ENCODE measurements at regions of chr2 and their contacts with region 1.

Region 1: DNA sequence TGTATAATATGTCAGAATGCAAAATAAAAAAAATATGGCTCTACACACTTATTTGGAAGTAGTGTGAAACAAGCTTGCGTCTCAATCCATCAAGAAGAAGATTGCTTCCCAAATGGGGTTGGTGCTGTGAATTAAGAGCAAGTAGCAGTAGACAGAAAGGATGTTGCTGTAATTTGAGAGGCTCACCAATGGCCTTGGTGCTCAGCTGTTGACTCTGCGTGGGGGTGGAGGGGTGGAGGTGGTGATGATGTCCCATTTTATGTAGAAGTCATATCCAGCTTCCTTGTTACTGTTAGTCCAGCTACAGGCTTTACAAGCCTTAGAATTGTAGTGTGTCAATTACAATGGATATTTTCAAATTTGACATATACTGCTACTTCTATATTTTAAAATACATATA is 223.4 kb upstream of the RND3 start:
- DNase-seq: no peak
- H3K4me3 ChIP-seq: no peak overlapping the region
- H3K27ac ChIP-seq: no peak overlapping the region
- H3K4me1 ChIP-seq: no peaks in the 10 kb centered on the region
- H3K27me3 ChIP-seq: no peaks in the 10 kb centered on the region
- CTCF ChIP-seq: no peak

Region 2: GRCh38 chr2:150698016-150698661 is 12.8 kb before region 1 on chr2:
- CTCF ChIA-PET with region 1: no interaction called
- dilution Hi-C with region 1: no loop called
- in situ Hi-C with region 1: no loop called
- intact Hi-C with region 1: loop called (anchors 1 kb)
- DNase-seq: no peak
- H3K4me3 ChIP-seq: no peak overlapping the region
- H3K27ac ChIP-seq: no peak overlapping the region
- H3K4me1 ChIP-seq: no peaks in the 10 kb centered on the region
- H3K27me3 ChIP-seq: no peaks in the 10 kb centered on the region
- CTCF ChIP-seq: no peak

Region 3: DNA sequence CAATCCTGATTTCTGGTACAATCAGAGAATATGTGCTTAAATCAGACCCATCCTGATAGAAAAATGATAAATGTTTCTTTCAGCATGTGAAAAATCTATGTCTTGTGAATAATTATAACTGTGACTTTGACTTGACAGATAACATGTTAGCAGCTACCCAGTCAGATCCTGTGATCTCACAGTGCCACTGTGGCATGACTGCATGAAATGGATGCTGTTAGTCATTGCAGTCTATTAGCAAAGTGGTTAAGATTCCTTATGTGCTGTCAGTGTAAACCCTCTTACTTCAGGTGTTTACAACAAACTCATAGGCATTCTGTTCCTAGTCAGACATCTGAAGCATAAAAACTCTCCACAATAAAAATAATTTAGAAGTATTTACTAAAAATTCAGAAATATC is 21.1 kb after region 1 on chr2:
- CTCF ChIA-PET with region 1: no interaction called
- dilution Hi-C with region 1: no loop called
- in situ Hi-C with region 1: no loop called
- intact Hi-C with region 1: no loop called
- DNase-seq: peak; percentile 51
- H3K4me3 ChIP-seq: no peak overlapping the region
- H3K27ac ChIP-seq: no peak overlapping the region
- H3K4me1 ChIP-seq: no peaks in the 10 kb centered on the region
- H3K27me3 ChIP-seq: no peaks in the 10 kb centered on the region
- CTCF ChIP-seq: no peak

Region 4: GRCh38 chr2:150911766-150912280 is 200.9 kb after region 1 on chr2:
- CTCF ChIA-PET with region 1: no interaction called
- dilution Hi-C with region 1: no loop called
- in situ Hi-C with region 1: no loop called
- intact Hi-C with region 1: loop called (anchors 10 kb)
- DNase-seq: peak; percentile 70
- H3K4me3 ChIP-seq: no peak overlapping the region
- H3K27ac ChIP-seq: peak overlapping the region; percentile 30
- H3K4me1 ChIP-seq: peaks cover 19% of the 10 kb centered on the region
- H3K27me3 ChIP-seq: no peaks in the 10 kb centered on the region
- CTCF ChIP-seq: peak in 1 of 2 donors; percentile 36